A673 (cell line): ENCODE measurements at regions of chr12 and their contacts with region 1.

Region 1: DNA sequence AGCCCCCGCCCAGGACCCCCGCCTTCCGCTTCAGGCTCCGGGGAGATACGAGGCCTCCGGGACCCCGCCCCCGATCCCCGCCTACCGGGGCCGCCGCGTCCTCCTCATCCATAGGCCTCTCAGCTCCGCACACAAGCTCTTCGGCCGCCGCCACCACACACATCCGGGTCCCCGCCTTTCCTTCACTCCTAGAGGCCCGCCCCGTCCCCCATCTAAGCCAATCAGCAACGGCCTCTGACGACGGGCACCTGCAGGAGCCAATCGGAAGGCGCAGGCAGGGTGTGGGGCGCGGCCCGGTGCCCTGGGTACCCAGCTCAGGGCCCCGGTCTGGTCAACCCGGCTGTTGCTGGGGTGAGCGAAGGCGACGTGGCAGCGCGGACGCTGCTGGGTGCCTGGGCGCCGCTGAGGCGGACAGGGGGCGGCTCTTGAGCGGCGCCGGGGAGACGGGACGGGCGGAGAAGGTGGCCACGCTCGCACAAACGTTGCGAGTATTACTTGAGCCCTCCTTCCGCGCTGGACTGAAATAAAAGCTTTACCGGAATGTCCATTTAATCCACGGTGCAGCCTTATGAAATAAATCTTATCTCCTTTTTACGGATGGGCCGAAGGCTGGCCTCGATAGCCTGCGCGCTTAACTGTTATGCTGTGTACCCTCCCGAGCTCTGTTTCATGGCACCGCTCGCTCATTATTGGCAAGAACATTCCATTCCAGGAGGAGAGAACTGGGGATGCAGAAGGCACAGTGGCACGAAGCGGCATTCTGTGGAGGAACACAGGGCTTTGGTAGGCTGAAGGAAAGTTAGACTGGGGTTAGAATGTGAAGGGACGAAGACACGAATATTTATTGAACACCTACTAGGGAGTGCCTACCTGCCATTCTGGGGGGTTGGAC is at the start of gene SPRYD3:
- DNase-seq: peak; percentile 97
- H3K4me3 ChIP-seq: peak within 1 kb of the TSS; percentile 65
- H3K27ac ChIP-seq: peak within 1 kb of the TSS; percentile 62
- H3K4me1 ChIP-seq: peaks cover 4% of the 10 kb centered on the region
- H3K27me3 ChIP-seq: no peaks in the 10 kb centered on the region
- CTCF ChIP-seq: no peak
- total RNA-seq, gene SPRYD3: 17.0 and 19.3 TPM in 2 replicates

Region 2: DNA sequence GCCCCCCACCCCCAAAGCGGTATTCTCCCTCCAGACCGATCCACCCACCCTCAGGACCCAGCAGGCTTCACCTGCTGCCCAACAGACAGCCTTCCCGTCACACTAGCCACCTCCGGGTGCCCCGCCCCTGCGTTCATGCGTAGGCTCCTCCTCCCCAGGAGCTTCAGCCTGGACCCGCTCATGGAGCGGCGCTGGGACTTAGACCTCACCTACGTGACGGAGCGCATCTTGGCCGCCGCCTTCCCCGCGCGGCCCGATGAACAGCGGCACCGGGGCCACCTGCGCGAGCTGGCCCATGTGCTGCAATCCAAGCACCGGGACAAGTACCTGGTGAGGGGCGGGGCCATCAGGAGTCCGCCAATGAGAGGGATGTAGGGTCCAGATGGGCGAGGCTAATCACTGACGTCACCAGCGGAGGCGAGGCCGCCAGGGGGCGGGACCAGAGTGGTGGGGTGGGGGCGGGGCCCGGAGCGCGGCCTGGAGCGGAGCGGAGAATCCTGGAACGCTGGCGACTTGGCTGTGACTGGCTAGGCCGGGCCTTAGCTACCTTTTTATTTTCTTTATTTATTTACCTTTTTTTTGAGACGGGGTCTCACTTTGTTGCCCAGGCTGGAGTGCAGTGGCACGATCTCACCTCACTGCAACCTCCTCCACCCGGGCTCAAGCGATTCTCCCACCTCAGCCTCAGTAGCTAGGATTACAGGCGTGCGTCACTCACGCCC is 25.2 kb before region 1 on chr12:
- CTCF ChIA-PET with region 1: interaction called, 11 read pairs
- POLR2A ChIA-PET with region 1: no interaction called
- intact Hi-C with region 1: no loop called
- DNase-seq: peak; percentile 95
- H3K4me3 ChIP-seq: peak overlapping the region; percentile 81
- H3K27ac ChIP-seq: peak overlapping the region; percentile 81
- H3K4me1 ChIP-seq: peaks cover 36% of the 10 kb centered on the region
- H3K27me3 ChIP-seq: no peaks in the 10 kb centered on the region
- CTCF ChIP-seq: no peak

Region 3: GRCh38 chr12:53098982-53099651 is 19.6 kb after region 1 on chr12:
- CTCF ChIA-PET with region 1: interaction called, 17 read pairs
- POLR2A ChIA-PET with region 1: no interaction called
- intact Hi-C with region 1: no loop called
- DNase-seq: peak; percentile 93
- H3K4me3 ChIP-seq: peak overlapping the region; percentile 61
- H3K27ac ChIP-seq: peak overlapping the region; percentile 6
- H3K4me1 ChIP-seq: peaks cover 23% of the 10 kb centered on the region
- H3K27me3 ChIP-seq: no peaks in the 10 kb centered on the region
- CTCF ChIP-seq: peak; percentile 93

Region 4: DNA sequence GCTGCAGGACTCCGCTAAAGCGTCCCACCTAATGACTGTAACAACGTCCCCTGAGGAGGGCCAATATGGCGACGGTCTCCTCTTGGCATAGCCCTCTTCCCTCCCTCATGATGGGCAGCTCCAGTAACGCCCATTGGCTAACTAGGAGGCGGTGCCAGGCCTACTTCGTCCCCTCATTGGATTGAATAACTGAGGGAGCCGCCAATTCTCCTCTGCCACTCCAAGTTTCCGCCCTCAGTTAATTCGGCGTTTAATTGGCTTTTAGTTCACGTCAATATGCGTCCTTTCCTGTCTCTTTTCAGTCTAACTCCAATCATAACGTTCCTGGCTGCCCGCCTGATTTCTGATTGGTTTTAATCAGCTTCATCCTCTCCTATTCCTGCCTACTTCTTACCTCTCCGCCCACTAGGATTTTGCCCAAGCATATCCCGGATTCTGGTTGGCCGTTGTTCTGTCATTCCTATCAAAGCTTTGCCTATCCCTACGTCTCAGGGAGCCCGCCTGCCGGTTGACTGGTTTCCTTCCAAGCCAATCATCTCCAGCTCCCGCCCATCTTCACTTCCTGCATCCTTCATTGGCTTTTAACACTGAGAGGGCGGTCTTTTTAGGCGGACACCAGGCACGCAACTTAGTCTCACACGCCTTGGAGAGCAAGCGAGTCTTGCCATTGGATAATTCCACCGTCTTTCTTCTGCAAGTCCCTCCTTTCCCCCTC is 300.1 kb after region 1 on chr12:
- CTCF ChIA-PET with region 1: no interaction called
- POLR2A ChIA-PET with region 1: no interaction called
- intact Hi-C with region 1: no loop called
- DNase-seq: peak; percentile 100
- H3K4me3 ChIP-seq: peak overlapping the region; percentile 77
- H3K27ac ChIP-seq: peak overlapping the region; percentile 98
- H3K4me1 ChIP-seq: peaks cover 26% of the 10 kb centered on the region
- H3K27me3 ChIP-seq: no peaks in the 10 kb centered on the region
- CTCF ChIP-seq: no peak